IMR-90 (cell line): ENCODE measurements at regions of chr1 and their contacts with region 1.

Region 1: GRCh38 chr1:67760030-67760821 is 73.0 kb downstream of the GNG12 start:
- DNase-seq: peak; percentile 86
- ATAC-seq: peak; percentile 79
- H3K4me3 ChIP-seq: no peak overlapping the region
- H3K27ac ChIP-seq: peak overlapping the region; percentile 28
- H3K4me1 ChIP-seq: peaks cover 19% of the 10 kb centered on the region
- H3K27me3 ChIP-seq: no peaks in the 10 kb centered on the region
- CTCF ChIP-seq: peak; percentile 78
- POLR2A ChIP-seq: no peak
- RAD21 ChIP-seq: peak; percentile 74

Region 2: GRCh38 chr1:67390041-67390887 is 370.0 kb before region 1 on chr1:
- CTCF ChIA-PET with region 1: no interaction called
- POLR2A ChIA-PET with region 1: no interaction called
- dilution Hi-C with region 1: no loop called
- in situ Hi-C with region 1: no loop called
- intact Hi-C with region 1: no loop called
- DNase-seq: peak; percentile 65
- ATAC-seq: peak; percentile 68
- H3K4me3 ChIP-seq: no peak overlapping the region
- H3K27ac ChIP-seq: no peak overlapping the region
- H3K4me1 ChIP-seq: peaks cover 1% of the 10 kb centered on the region; the same call in 1 of the 2 replicates
- H3K27me3 ChIP-seq: no peaks in the 10 kb centered on the region
- CTCF ChIP-seq: no peak
- POLR2A ChIP-seq: no peak
- RAD21 ChIP-seq: no peak

Region 3: GRCh38 chr1:67404212-67404620 is 356.0 kb before region 1 on chr1:
- CTCF ChIA-PET with region 1: no interaction called
- POLR2A ChIA-PET with region 1: no interaction called
- dilution Hi-C with region 1: no loop called
- in situ Hi-C with region 1: loop called (anchors 25 kb)
- intact Hi-C with region 1: no loop called
- DNase-seq: peak; percentile 46
- ATAC-seq: no peak
- H3K4me3 ChIP-seq: no peak overlapping the region
- H3K27ac ChIP-seq: no peak overlapping the region
- H3K4me1 ChIP-seq: peaks cover 2% of the 10 kb centered on the region
- H3K27me3 ChIP-seq: no peaks in the 10 kb centered on the region
- CTCF ChIP-seq: no peak
- POLR2A ChIP-seq: no peak
- RAD21 ChIP-seq: no peak

Region 4: DNA sequence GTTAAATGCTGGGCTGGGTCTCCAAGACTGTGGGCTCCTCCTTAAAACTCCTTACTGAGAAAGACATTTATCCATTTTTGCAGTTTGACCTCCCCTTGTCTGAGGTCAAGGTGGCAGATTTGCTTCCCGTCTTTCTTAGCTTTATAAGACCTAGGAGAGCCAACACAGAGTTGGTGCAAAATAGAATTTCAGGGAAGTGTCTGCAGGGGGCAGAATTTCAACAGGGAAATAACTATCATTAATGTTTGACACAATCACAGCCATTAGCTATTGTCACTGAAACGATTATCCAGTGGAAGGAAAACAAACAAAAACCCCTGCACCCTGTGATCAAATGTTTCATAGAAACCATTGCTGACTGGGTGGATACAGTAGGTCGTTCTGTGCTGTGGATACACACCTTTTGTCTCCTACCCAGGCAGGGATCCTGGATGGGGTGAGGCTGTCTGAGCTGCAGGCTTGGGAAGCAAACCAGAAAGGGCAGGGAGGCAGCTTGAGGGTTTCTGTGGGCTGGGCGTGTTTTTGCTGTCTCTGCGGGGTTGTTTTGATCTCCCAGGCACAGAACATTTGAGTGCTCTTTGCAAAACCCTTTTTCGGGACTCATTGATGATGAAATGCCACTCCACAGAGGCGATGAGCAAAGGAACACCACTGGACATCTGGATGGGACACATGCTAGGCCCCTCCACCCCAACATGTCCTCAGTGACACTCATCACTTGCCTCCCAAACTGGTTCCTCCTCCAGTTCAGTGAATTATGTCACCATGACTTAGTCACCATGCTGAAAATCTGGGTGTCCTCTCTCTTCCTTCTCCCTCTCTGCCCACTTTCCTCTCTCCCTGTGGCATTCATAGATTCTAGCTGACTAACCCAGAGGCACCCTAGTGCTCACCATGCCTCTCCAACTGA is 235.8 kb before region 1 on chr1:
- CTCF ChIA-PET with region 1: interaction called, 3 read pairs
- POLR2A ChIA-PET with region 1: interaction called, 22 read pairs
- dilution Hi-C with region 1: no loop called
- in situ Hi-C with region 1: no loop called
- intact Hi-C with region 1: no loop called
- DNase-seq: no peak
- ATAC-seq: peak; percentile 40
- H3K4me3 ChIP-seq: no peak overlapping the region
- H3K27ac ChIP-seq: no peak overlapping the region
- H3K4me1 ChIP-seq: no peaks in the 10 kb centered on the region
- H3K27me3 ChIP-seq: peaks cover 6% of the 10 kb centered on the region; the same call in 1 of the 2 replicates
- CTCF ChIP-seq: 0 out of 2 replicates have a peak, but pooled peaks have one; percentile 22
- POLR2A ChIP-seq: no peak
- RAD21 ChIP-seq: no peak

Region 5: DNA sequence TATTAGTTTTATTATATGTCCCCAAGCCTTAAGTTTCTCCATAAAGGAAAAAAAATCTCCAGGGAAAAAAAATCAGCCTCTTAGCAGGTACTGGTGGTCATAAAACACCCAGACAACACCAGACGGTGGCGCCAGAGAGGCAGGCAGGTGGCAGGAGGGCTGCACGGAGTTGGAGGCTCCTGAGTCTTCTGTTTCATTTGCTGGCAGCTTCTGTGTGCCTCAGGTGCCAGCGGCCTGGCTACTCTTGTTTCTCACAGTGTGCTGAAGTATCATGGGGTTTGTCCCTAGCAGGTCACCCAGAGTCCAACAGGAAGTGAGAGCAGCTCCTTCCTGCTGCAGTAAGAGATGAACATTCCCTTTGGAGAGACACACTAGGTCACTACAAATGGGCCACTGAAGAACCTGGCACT is 198.5 kb before region 1 on chr1:
- CTCF ChIA-PET with region 1: interaction called, 24 read pairs
- POLR2A ChIA-PET with region 1: no interaction called
- dilution Hi-C with region 1: no loop called
- in situ Hi-C with region 1: no loop called
- intact Hi-C with region 1: loop called (anchors 1 kb)
- DNase-seq: peak; percentile 85
- ATAC-seq: peak; percentile 82
- H3K4me3 ChIP-seq: no peak overlapping the region
- H3K27ac ChIP-seq: no peak overlapping the region
- H3K4me1 ChIP-seq: peaks cover 6% of the 10 kb centered on the region
- H3K27me3 ChIP-seq: no peaks in the 10 kb centered on the region
- CTCF ChIP-seq: peak; percentile 89
- POLR2A ChIP-seq: no peak
- RAD21 ChIP-seq: peak; percentile 92

Region 6: GRCh38 chr1:67629370-67630075 is 130.7 kb before region 1 on chr1:
- CTCF ChIA-PET with region 1: no interaction called
- POLR2A ChIA-PET with region 1: no interaction called
- dilution Hi-C with region 1: no loop called
- in situ Hi-C with region 1: no loop called
- intact Hi-C with region 1: no loop called
- DNase-seq: no peak
- ATAC-seq: no peak
- H3K4me3 ChIP-seq: no peak overlapping the region
- H3K27ac ChIP-seq: no peak overlapping the region
- H3K4me1 ChIP-seq: peaks cover 1% of the 10 kb centered on the region; the same call in 1 of the 2 replicates
- H3K27me3 ChIP-seq: no peaks in the 10 kb centered on the region; the same call in 1 of the 2 replicates
- CTCF ChIP-seq: no peak
- POLR2A ChIP-seq: no peak
- RAD21 ChIP-seq: no peak

Region 7: GRCh38 chr1:67815303-67816094 is 55.3 kb after region 1 on chr1:
- CTCF ChIA-PET with region 1: no interaction called
- POLR2A ChIA-PET with region 1: no interaction called
- dilution Hi-C with region 1: no loop called
- in situ Hi-C with region 1: no loop called
- intact Hi-C with region 1: no loop called
- DNase-seq: no peak
- ATAC-seq: no peak
- H3K4me3 ChIP-seq: no peak overlapping the region
- H3K27ac ChIP-seq: no peak overlapping the region
- H3K4me1 ChIP-seq: peaks cover 20% of the 10 kb centered on the region
- H3K27me3 ChIP-seq: no peaks in the 10 kb centered on the region
- CTCF ChIP-seq: no peak
- POLR2A ChIP-seq: no peak
- RAD21 ChIP-seq: no peak

Region 8: DNA sequence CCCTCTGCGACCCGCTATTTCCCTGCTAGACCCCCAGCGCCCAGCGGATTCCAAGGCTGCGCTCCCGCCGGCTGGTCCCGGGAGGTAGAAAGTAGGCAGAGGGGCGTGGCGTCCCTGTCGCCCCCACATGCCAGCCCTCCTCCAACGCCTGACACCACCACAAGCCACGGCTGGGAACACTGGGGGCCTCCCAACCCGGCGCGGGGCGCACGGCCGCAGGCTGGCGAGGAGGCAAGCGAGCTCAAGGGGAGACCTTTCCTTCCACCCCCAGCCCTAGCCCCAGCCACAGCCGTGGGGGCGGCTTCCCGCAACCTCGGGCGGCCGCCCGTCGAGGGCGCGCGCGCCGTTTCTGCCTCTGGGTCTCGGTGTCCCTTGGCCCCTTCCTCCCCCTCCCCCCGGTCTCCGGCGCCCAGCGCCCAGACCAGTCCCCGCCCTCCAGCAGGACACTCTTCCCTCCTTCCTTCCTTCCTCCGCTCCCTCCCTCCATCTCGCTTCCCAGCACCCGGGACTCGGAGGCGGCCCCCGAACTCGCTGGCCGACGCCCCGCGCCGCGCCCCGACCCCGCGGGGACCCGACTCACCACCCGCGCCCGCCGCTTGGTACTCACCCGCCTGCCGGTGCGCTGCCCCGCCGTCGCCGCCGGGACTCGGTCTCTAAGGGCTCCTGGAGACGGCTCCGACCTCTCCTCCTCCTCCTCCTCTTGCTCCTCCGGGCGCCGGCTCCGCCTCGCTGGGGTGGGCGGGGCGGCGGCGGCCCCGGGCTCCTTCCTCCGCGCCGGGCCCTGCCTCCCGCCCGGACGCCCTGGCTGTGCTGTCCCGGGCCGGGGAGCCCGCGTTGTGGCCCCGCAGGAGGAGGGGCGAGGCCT is 72.7 kb after region 1 on chr1 and contains the start of gene GNG12:
- CTCF ChIA-PET with region 1: interaction called, 11 read pairs
- POLR2A ChIA-PET with region 1: no interaction called
- dilution Hi-C with region 1: no loop called
- in situ Hi-C with region 1: loop called (anchors 5 kb)
- intact Hi-C with region 1: no loop called
- DNase-seq: peak; percentile 73
- ATAC-seq: peak; percentile 89
- H3K4me3 ChIP-seq: peak within 1 kb of the TSS; percentile 93
- H3K27ac ChIP-seq: peak within 1 kb of the TSS; percentile 75
- H3K4me1 ChIP-seq: peaks cover 2% of the 10 kb centered on the region; the same call in 1 of the 2 replicates
- H3K27me3 ChIP-seq: no peaks in the 10 kb centered on the region
- CTCF ChIP-seq: no peak
- POLR2A ChIP-seq: peak; percentile 66
- RAD21 ChIP-seq: no peak
- total RNA-seq, gene GNG12: 132 and 233 TPM in 2 replicates